ENCODE measurements at regions of chr2 and their contacts with region 1.

Region 1: DNA sequence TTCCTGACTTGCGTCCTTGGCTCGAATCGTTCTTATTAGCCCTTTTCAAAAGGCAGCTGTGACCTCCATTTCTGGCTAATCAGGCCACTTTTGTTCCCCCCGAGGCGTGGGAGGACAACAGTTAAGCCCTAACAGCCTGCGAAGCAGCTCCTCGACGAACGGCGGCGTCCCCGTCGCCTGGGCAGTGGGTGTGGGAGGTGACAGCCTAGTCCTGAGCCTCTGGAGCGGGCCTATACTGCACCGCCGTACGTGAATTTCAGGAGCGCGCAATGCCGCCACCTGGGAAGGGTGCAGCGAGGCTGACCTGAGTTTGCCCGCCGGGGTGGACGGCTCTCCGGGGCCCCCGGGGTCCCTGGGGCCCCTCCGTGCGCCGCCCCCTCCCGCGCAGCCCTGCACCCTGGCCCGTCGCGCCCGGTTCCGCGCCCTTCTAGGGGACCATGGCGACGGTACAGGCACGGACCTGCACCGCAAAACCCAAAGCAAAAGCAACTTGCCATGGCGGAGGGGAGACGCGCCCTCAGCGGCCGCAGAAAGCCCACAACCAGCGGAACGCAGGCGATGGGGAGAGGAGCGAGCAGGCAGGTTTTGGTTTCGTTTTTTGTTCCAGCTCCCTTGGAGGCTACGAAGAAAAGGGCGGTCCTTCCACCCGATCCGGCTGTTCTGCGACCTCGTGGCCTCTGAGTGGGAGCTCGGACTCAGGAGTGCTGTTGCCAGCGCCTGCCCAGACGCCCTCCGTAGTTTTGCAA is at the start of gene RBM43:
- DNase-seq: peak; percentile 86 to 91 (median 87)
- H3K4me3 ChIP-seq: peak within 1 kb of the TSS; percentile 78 to 98
- H3K4me3 Mint-ChIP-seq: peak within 1 kb of the TSS; percentile 80 to 98 (median 94)
- H3K27ac ChIP-seq: peak within 1 kb of the TSS; percentile 94
- H3K27ac Mint-ChIP-seq: peak within 1 kb of the TSS; percentile 92 to 100 (median 97)
- H3K4me1 ChIP-seq: peaks cover 20% of the 10 kb centered on the region
- H3K4me1 Mint-ChIP-seq: peaks cover 19 to 32% (median 22%) of the 10 kb centered on the region in 4 donors
- H3K27me3 ChIP-seq: no peaks in the 10 kb centered on the region
- H3K27me3 Mint-ChIP-seq: no peaks in the 10 kb centered on the region
- total RNA-seq, gene RBM43: 18.2 to 20.7 TPM

Region 2: DNA sequence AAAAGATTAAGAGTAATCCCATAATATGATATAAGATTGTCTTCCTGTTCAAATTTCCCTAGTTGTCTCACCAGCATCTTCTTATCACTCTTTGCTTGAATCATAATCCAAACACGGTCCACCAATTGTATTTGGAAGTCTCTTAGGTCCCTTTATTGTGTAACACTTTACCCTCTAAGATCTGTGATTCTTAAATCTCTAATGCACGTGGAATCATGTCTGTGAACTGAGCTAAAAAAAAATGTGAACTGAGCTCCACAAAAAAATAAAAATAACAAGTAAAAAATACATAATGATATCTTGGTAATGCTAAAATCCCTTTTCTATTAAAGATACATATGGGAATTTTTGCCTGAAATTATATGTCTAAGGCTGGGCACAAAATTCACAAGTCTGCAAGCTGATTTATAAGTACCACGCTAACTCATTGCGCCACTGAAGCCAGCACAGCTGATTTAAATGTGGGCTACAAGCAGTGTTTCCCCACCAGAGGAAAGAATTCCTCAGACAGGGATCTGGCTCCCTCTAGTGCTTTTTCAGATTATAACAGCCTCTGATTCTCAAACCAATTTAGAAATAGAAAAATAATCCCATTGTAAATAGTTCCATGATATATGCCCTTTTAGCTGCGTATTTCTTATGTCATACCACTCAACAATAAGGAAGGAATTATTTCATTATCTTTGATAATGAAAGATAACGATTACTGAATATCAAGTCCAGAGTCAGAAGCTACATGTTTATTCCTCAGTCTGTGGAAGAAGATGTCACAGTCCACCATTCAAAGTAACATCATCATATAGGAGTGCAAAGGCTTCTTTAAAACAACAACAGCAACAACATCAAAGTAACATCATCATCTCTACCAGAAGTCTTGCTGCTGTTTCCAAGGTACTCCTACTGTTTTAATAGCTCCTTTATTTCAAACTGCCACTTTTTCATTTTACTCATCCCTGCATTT is 22.6 kb before region 1 on chr2:
- CTCF ChIA-PET with region 1: interaction called, 11 read pairs
- POLR2A ChIA-PET with region 1: interaction called, 8 read pairs
- intact Hi-C with region 1: no loop called
- DNase-seq: peak; percentile 34 to 48 (median 46)
- H3K4me3 ChIP-seq: no peak overlapping the region
- H3K4me3 Mint-ChIP-seq: no peak overlapping the region
- H3K27ac ChIP-seq: no peak overlapping the region
- H3K27ac Mint-ChIP-seq: no peak overlapping the region
- H3K4me1 ChIP-seq: no peaks in the 10 kb centered on the region
- H3K4me1 Mint-ChIP-seq: peaks cover 0 to 5% (median 0%) of the 10 kb centered on the region in 4 donors
- H3K27me3 ChIP-seq: no peaks in the 10 kb centered on the region
- H3K27me3 Mint-ChIP-seq: peaks cover 0 to 6% of the 10 kb centered on the region in 2 donors

Region 3: DNA sequence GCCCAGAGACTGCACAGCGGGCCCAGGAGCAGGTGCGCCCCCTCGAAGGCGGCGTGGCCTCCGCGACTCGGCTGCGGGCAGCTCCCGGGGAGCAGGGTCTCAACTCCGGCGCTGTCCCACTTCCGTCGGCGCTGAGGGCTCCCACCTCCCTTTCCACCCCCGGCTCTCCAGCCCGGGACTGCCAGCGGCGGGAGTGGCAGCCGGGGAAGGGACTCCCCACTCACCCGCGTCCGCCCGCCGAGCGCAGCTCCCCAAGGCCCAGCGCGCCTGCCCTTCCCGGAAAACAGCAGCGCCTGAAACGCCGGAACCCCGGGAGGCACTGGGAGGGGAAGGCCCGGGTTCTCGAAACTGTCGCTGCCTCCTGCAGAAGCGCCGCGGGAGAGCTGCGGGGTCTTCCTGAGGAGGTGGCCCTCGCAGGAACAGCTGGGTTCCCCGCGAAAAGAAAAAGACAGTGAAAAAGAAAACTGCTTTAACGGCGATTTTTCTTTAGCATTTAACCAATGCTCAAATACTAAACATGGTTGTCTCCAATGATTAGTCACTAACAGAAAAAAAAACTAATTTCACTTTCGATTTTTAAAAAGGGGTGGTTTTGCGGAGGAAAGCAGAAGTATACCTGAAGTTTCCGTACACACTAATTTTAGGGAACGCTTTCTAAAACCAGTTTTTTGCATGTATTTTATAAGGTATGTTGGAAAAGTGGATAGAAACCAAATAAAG is 28.1 kb after region 1 on chr2 and contains the start of gene NMI:
- CTCF ChIA-PET with region 1: interaction called, 14 read pairs
- POLR2A ChIA-PET with region 1: interaction called, 139 read pairs
- intact Hi-C with region 1: loop called (anchors 1 kb)
- DNase-seq: peak; percentile 75 to 84 (median 81)
- H3K4me3 ChIP-seq: peak within 1 kb of the TSS; percentile 70 to 82
- H3K4me3 Mint-ChIP-seq: peak within 1 kb of the TSS; percentile 90 to 98 (median 94)
- H3K27ac ChIP-seq: peak within 1 kb of the TSS; percentile 95
- H3K27ac Mint-ChIP-seq: peak within 1 kb of the TSS; percentile 96 to 99 (median 98)
- H3K4me1 ChIP-seq: peaks cover 45% of the 10 kb centered on the region
- H3K4me1 Mint-ChIP-seq: peaks cover 31 to 62% (median 49%) of the 10 kb centered on the region in 4 donors
- H3K27me3 ChIP-seq: no peaks in the 10 kb centered on the region
- H3K27me3 Mint-ChIP-seq: no peaks in the 10 kb centered on the region
- total RNA-seq, gene NMI: 38.6 to 40.0 TPM

Region 4: GRCh38 chr2:151437630-151438029 is 176.2 kb after region 1 on chr2:
- CTCF ChIA-PET with region 1: interaction called, 6 read pairs
- POLR2A ChIA-PET with region 1: no interaction called
- intact Hi-C with region 1: loop called (anchors 1 kb)
- DNase-seq: peak in 4 of 5 donors; percentile 23 to 41 (median 32)
- H3K4me3 ChIP-seq: no peak overlapping the region
- H3K4me3 Mint-ChIP-seq: no peak overlapping the region
- H3K27ac ChIP-seq: no peak overlapping the region
- H3K27ac Mint-ChIP-seq: peak overlapping the region in 5 of 7 donors; percentile 36 to 81 (median 61)
- H3K4me1 ChIP-seq: no peaks in the 10 kb centered on the region
- H3K4me1 Mint-ChIP-seq: peaks cover 3 to 9% (median 6%) of the 10 kb centered on the region in 4 donors
- H3K27me3 ChIP-seq: no peaks in the 10 kb centered on the region
- H3K27me3 Mint-ChIP-seq: no peaks in the 10 kb centered on the region

Region 5: GRCh38 chr2:151792589-151792988 is 531.2 kb after region 1 on chr2:
- CTCF ChIA-PET with region 1: no interaction called
- POLR2A ChIA-PET with region 1: no interaction called
- intact Hi-C with region 1: no loop called
- DNase-seq: no peak
- H3K4me3 ChIP-seq: no peak overlapping the region
- H3K4me3 Mint-ChIP-seq: no peak overlapping the region
- H3K27ac ChIP-seq: no peak overlapping the region
- H3K27ac Mint-ChIP-seq: no peak overlapping the region
- H3K4me1 ChIP-seq: no peaks in the 10 kb centered on the region
- H3K4me1 Mint-ChIP-seq: peaks cover 0 to 3% (median 1%) of the 10 kb centered on the region in 4 donors
- H3K27me3 ChIP-seq: no peaks in the 10 kb centered on the region
- H3K27me3 Mint-ChIP-seq: no peaks in the 10 kb centered on the region

Region 6: GRCh38 chr2:152717228-152718075 is 1456.0 kb after region 1 on chr2 and contains the start of gene PRPF40A:
- CTCF ChIA-PET with region 1: no interaction called
- POLR2A ChIA-PET with region 1: interaction called, 3 read pairs
- intact Hi-C with region 1: loop called (anchors 5 kb)
- DNase-seq: peak; percentile 98 to 99 (median 99)
- H3K4me3 ChIP-seq: peak within 1 kb of the TSS; percentile 89 to 94
- H3K4me3 Mint-ChIP-seq: peak within 1 kb of the TSS; percentile 97 to 100 (median 99)
- H3K27ac ChIP-seq: peak within 1 kb of the TSS; percentile 96
- H3K27ac Mint-ChIP-seq: peak within 1 kb of the TSS; percentile 95 to 100 (median 98)
- H3K4me1 ChIP-seq: peaks cover 65% of the 10 kb centered on the region
- H3K4me1 Mint-ChIP-seq: peaks cover 39 to 85% (median 58%) of the 10 kb centered on the region in 4 donors
- H3K27me3 ChIP-seq: no peaks in the 10 kb centered on the region
- H3K27me3 Mint-ChIP-seq: peaks cover 0 to 2% of the 10 kb centered on the region in 2 donors
- total RNA-seq, gene PRPF40A: 95.0 to 105 TPM